ENCODE measurements at regions of chr14 and their contacts with region 1.

Region 1: DNA sequence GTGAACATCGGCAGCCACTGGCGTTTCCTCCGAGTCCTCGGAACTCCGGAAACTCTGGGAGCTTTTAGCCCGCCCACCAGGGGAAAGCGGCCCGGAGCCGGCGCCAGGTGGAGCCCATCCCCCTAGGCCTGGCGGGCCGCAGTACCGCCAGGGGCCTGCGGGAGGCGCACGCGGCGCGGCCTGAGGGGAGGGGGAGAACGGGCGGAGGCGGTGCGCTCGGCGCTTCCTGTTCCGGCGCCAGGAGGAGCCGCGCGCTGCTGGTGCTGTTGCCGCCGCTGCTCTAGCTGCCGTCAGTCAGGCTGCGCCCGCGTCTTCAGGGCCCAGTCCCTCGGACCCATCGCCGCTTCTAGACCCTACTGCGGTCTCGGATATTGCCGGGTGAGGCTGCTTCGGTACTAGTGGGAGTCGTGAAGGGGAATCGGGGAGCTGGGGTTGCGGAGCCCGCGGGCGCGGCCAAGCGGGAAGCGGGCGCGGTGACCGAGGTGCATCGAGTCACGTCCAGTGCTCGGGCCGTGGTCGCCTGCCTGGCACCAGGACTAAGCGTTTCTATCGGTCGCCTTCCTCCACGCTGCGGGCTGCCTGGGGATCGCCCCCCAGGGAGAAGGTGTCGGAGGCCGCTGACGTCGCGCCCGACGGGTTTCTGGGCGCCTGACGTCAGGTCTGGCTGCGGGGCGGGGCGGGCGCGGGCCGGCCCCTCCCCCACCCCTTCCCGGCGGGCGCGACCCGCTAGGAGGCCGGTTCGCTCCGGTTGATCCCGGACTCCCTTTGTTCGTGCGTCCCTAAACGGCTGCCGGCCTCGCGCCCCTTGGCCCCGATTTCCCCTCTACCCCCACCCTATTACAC is at the start of gene MAPK1IP1L:
- DNase-seq: peak; percentile 47
- H3K4me3 ChIP-seq: peak within 1 kb of the TSS; percentile 95
- H3K27me3 ChIP-seq: no peaks in the 10 kb centered on the region
- CTCF ChIP-seq: peak; percentile 69
- polyA plus RNA-seq, gene MAPK1IP1L: 56.4 and 90.0 TPM in 2 replicates

Region 2: DNA sequence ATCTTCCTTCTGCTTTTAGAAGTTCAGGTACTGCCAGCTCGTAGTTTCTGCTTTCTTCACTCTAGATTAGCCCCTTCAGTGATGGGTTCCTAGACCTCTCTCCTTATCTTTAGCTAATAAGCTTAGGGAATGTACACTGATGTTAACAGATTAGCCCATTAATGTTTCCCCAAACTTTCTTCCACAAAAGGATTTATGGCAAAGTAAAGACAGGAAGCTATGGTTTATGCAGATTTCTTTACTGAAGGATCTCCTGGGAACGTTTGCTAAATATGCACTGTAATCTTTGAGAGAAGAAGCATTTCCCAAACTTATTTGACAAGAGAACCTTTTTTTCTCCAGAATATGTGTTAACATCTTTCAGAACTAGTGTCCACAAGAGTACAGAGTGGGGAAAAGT is 20.5 kb before region 1 on chr14:
- CTCF ChIA-PET with region 1: interaction called, 22 read pairs
- POLR2A ChIA-PET with region 1: no interaction called
- DNase-seq: no peak
- H3K4me3 ChIP-seq: no peak overlapping the region
- H3K27me3 ChIP-seq: no peaks in the 10 kb centered on the region
- CTCF ChIP-seq: no peak

Region 3: GRCh38 chr14:55062517-55063351 is 11.1 kb after region 1 on chr14:
- CTCF ChIA-PET with region 1: interaction called, 12 read pairs
- POLR2A ChIA-PET with region 1: no interaction called
- DNase-seq: no peak
- H3K4me3 ChIP-seq: no peak overlapping the region
- H3K27me3 ChIP-seq: no peaks in the 10 kb centered on the region
- CTCF ChIP-seq: no peak

Region 4: GRCh38 chr14:55071870-55072640 is 20.4 kb after region 1 on chr14:
- CTCF ChIA-PET with region 1: interaction called, 10 read pairs
- POLR2A ChIA-PET with region 1: interaction called, 3 read pairs
- DNase-seq: peak; percentile 89
- H3K4me3 ChIP-seq: no peak overlapping the region
- H3K27me3 ChIP-seq: no peaks in the 10 kb centered on the region
- CTCF ChIP-seq: no peak

Region 5: GRCh38 chr14:55094321-55095157 is 42.9 kb after region 1 on chr14:
- CTCF ChIA-PET with region 1: interaction called, 12 read pairs
- POLR2A ChIA-PET with region 1: no interaction called
- DNase-seq: no peak
- H3K4me3 ChIP-seq: no peak overlapping the region
- H3K27me3 ChIP-seq: no peaks in the 10 kb centered on the region
- CTCF ChIP-seq: no peak

Region 6: DNA sequence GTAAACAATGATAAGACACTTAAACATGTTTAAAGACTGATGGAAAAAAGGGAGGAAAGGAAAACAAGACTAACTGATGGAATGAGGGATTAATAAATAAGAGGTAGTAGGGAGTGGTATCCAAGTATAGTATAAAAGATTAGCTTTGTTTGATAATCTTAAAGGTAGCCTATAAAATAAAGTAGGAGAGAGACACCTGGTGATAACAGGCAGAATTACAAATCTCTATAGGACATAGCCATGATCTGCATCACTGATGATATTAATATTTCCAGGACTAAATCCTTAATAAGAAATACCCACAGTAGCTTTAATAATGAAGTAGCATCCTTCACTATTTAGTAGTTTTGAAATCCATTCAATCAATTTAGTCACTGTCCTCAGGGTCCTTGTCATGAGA is 109.3 kb after region 1 on chr14:
- CTCF ChIA-PET with region 1: interaction called, 10 read pairs
- POLR2A ChIA-PET with region 1: no interaction called
- DNase-seq: no peak
- H3K4me3 ChIP-seq: no peak overlapping the region
- H3K27me3 ChIP-seq: no peaks in the 10 kb centered on the region
- CTCF ChIP-seq: peak; percentile 52